Upper lobe of right lung (tissue), 1 donor: ENCODE measurements at regions of chr3 and their contacts with region 1.

Region 1: DNA sequence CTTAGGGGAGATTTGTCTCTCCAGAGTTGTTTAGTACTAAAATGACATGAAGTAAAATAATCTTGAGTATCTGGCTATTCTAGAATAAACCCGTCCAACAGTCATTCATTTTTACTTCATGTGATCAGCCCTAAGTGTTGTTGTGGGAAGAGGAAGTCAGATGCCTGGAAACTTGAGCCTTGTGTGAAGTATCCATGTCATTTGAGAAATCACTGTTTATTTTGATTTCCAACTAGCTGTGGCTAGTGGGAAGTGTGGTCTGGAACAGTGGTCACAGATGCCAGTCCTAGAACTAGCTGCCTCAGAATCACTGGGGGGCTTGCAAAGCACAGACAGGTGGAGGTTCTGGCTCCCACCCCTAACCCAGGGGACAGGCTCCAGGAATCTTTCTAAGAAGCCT is 77.7 kb upstream of the LIMD1 start:
- DNase-seq: no peak
- ATAC-seq: peak; percentile 61
- H3K4me3 ChIP-seq: no peak overlapping the region
- H3K27ac ChIP-seq: peak overlapping the region; percentile 70
- H3K4me1 ChIP-seq: peaks cover 18% of the 10 kb centered on the region
- H3K27me3 ChIP-seq: no peaks in the 10 kb centered on the region
- CTCF ChIP-seq: no peak

Region 2: GRCh38 chr3:45244356-45244755 is 272.5 kb before region 1 on chr3:
- intact Hi-C with region 1: no loop called
- DNase-seq: no peak
- ATAC-seq: no peak
- H3K4me3 ChIP-seq: no peak overlapping the region
- H3K27ac ChIP-seq: no peak overlapping the region
- H3K4me1 ChIP-seq: no peaks in the 10 kb centered on the region
- H3K27me3 ChIP-seq: peaks cover 6% of the 10 kb centered on the region
- CTCF ChIP-seq: no peak

Region 3: GRCh38 chr3:45665101-45665572 is 148.3 kb after region 1 on chr3:
- intact Hi-C with region 1: loop called (anchors 5 kb)
- DNase-seq: no peak
- ATAC-seq: peak; percentile 73
- H3K4me3 ChIP-seq: peak overlapping the region; percentile 47
- H3K27ac ChIP-seq: peak overlapping the region; percentile 55
- H3K4me1 ChIP-seq: peaks cover 46% of the 10 kb centered on the region
- H3K27me3 ChIP-seq: no peaks in the 10 kb centered on the region
- CTCF ChIP-seq: peak; percentile 61